ENCODE measurements at regions of chr2 and their contacts with region 1.

Region 1: GRCh38 chr2:227884511-227884947 is 13.1 kb downstream of the DAW1 start:
- DNase-seq: no peak
- ATAC-seq: peak; percentile 99
- H3K4me3 ChIP-seq: no peak overlapping the region
- H3K27ac ChIP-seq: no peak overlapping the region
- H3K4me1 ChIP-seq: no peaks in the 10 kb centered on the region
- H3K27me3 ChIP-seq: 0 out of 4 replicates have a peak, but pooled peaks cover 0 to 2% of the 10 kb centered on the region in 2 experiments
- CTCF ChIP-seq: peak; percentile 85 to 96 (median 96)
- EP300 ChIP-seq: no peak
- POLR2A ChIP-seq: no peak
- RAD21 ChIP-seq: peak; percentile 67

Region 2: GRCh38 chr2:227132986-227133385 is 751.5 kb before region 1 on chr2:
- CTCF ChIA-PET with region 1: no interaction called
- POLR2A ChIA-PET with region 1: no interaction called
- RAD21 ChIA-PET with region 1: no interaction called
- SMC1A ChIA-PET with region 1: no interaction called
- in situ Hi-C with region 1: no loop called
- intact Hi-C with region 1: loop called (anchors 5 kb)
- DNase-seq: no peak
- ATAC-seq: no peak
- H3K4me3 ChIP-seq: no peak overlapping the region
- H3K27ac ChIP-seq: no peak overlapping the region
- H3K4me1 ChIP-seq: no peaks in the 10 kb centered on the region
- H3K27me3 ChIP-seq: no peaks in the 10 kb centered on the region
- CTCF ChIP-seq: no peak
- EP300 ChIP-seq: no peak
- POLR2A ChIP-seq: no peak
- RAD21 ChIP-seq: no peak

Region 3: DNA sequence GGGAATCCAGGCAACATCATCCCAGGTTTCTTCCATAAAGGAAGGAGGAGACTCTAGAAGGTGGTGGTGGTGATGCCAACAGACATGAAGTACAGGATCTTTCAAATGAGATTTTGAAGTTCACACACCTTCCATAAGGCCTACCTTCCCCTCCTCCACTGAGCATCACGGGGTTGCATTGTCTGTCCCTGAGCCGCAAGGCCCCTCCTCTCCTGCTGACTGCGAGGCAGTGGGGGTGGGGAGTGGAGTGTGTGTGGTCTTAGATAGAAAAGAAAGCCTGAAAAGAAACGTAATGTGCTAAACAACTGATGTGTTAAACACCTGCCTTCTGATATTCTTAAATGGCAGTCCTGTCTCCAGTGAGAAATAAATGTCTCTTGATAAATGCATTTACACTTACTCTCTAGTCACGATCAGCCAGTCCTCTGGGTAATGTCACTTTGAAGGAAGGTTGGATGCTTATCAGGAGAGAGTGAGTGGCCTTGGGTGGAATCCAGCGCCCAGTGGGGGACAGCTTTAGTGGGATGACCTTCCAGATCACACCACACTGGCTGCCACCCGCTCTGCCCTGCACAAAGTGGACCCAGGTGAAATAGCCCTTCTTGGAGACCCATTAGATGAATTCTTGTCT is 223.4 kb before region 1 on chr2:
- CTCF ChIA-PET with region 1: interaction called, 65 read pairs
- POLR2A ChIA-PET with region 1: no interaction called
- RAD21 ChIA-PET with region 1: interaction called, 9 read pairs
- SMC1A ChIA-PET with region 1: interaction called, 11 read pairs
- in situ Hi-C with region 1: loop called (anchors 5 kb)
- intact Hi-C with region 1: loop called (anchors 1 kb)
- DNase-seq: no peak
- ATAC-seq: no peak
- H3K4me3 ChIP-seq: no peak overlapping the region
- H3K27ac ChIP-seq: no peak overlapping the region
- H3K4me1 ChIP-seq: no peaks in the 10 kb centered on the region
- H3K27me3 ChIP-seq: no peaks in the 10 kb centered on the region
- CTCF ChIP-seq: no peak
- EP300 ChIP-seq: no peak
- POLR2A ChIP-seq: no peak
- RAD21 ChIP-seq: no peak

Region 4: DNA sequence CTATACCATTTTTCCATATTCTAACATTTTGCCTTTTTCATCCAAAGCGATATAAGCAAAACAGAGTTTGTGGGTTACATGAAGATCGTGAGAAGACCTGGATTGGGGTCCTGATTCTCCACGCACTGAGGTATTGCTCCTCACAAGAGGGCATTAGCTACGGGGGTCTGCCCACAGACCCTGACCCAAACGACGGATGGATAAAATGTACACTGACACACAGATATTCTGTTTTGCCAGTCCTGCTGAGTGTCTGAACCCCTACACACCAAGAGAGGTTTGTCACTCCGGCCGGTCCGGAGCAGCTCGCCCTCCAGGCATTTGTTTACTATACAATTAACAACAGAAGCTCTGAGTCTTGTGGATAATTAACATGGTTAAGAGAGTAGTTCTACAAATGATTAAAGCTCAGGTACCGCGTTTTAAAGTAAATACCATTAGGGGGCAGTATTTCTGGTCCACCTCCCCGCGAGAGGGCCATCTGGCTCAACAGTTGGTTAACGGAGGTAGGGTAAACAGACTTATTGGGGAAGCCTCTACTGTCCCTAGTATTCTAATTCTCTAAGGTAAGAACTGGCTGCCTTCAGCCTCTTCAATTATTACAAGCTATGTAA is 110.4 kb before region 1 on chr2:
- CTCF ChIA-PET with region 1: interaction called, 8 read pairs
- POLR2A ChIA-PET with region 1: no interaction called
- RAD21 ChIA-PET with region 1: no interaction called
- SMC1A ChIA-PET with region 1: interaction called, 4 read pairs
- in situ Hi-C with region 1: no loop called
- intact Hi-C with region 1: loop called (anchors 1 kb)
- DNase-seq: no peak
- ATAC-seq: peak; percentile 94
- H3K4me3 ChIP-seq: no peak overlapping the region
- H3K27ac ChIP-seq: no peak overlapping the region
- H3K4me1 ChIP-seq: no peaks in the 10 kb centered on the region
- H3K27me3 ChIP-seq: no peaks in the 10 kb centered on the region
- CTCF ChIP-seq: peak; percentile 22 to 46 (median 43); a peak in 5 of 6 replicates
- EP300 ChIP-seq: no peak
- POLR2A ChIP-seq: no peak
- RAD21 ChIP-seq: peak; percentile 43

Region 5: GRCh38 chr2:227817850-227818674 is 66.5 kb before region 1 on chr2:
- CTCF ChIA-PET with region 1: no interaction called
- POLR2A ChIA-PET with region 1: no interaction called
- RAD21 ChIA-PET with region 1: no interaction called
- SMC1A ChIA-PET with region 1: no interaction called
- in situ Hi-C with region 1: no loop called
- intact Hi-C with region 1: no loop called
- DNase-seq: peak; percentile 45
- ATAC-seq: peak; percentile 73
- H3K4me3 ChIP-seq: no peak overlapping the region
- H3K27ac ChIP-seq: no peak overlapping the region
- H3K4me1 ChIP-seq: no peaks in the 10 kb centered on the region
- H3K27me3 ChIP-seq: no peaks in the 10 kb centered on the region
- CTCF ChIP-seq: no peak
- EP300 ChIP-seq: no peak
- POLR2A ChIP-seq: no peak
- RAD21 ChIP-seq: no peak